Heart right ventricle (tissue), 16 donors: ENCODE measurements at regions of chr17 and their contacts with region 1.

Region 1: DNA sequence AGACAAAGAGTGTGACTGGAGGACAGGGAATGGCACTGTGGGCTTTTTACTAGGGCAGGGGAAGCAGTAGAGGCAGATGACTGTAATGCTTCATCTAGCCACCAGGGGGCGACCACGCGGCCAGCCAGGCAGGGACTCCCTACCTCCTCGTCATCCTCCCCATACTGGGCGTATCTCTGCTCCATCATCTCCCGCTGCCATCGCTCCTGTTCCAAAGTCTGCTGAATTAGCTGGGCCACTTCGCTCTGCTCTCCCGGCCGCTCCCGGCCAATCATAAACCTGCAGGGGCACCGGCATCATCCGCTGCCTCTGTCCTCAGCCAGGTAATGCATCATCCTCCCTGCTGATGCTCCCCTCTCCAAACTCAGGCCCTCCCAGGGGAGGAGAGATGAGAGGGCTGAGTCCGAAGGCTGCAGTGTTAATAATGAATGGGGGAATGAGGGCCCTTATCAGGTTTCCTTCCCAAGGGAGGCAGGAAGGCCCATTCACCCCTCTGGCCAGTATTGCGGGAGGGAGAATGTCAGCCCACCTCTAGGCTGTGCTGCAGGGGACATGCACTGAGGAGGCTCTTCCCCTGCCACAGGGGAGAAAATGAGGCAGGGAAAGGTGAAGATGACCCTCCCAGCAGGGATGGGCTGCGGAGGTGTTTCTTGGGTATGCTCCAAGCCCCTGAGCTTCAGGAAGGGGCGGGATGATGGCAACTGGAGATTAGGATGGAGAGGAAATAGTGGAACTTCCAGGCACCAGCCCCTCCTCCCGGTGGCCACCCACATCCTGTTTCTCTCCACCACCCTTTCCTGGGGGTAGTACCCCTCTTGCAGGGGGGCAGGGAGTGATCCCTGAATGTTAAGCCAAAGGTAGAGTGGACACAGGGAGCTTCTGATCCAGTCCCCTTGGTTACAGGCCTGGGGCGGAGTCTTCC is 10.3 kb upstream of the SAMD14 start:
- DNase-seq: peak; percentile 81 to 82
- ATAC-seq: peak; percentile 71 to 87 (median 78)
- H3K4me3 ChIP-seq: peak overlapping the region in 3 of 10 donors; percentile 10 to 19 (median 11)
- H3K27ac ChIP-seq: peak overlapping the region; percentile 29 to 83 (median 72)
- H3K4me1 ChIP-seq: peaks cover 14 to 61% (median 43%) of the 10 kb centered on the region in 9 donors
- H3K27me3 ChIP-seq: no peaks in the 10 kb centered on the region
- CTCF ChIP-seq: peak; percentile 92 to 99 (median 97)

Region 2: GRCh38 chr17:49899191-49899485 is 241.1 kb before region 1 on chr17:
- intact Hi-C with region 1: no loop called
- DNase-seq: no peak
- ATAC-seq: no peak
- H3K4me3 ChIP-seq: no peak overlapping the region
- H3K27ac ChIP-seq: no peak overlapping the region
- H3K4me1 ChIP-seq: peaks cover 0 to 6% (median 2%) of the 10 kb centered on the region in 9 donors
- H3K27me3 ChIP-seq: peaks cover 0 to 77% (median 57%) of the 10 kb centered on the region in 7 donors
- CTCF ChIP-seq: peak in 1 of 9 donors; percentile 9

Region 3: GRCh38 chr17:50123649-50124349 is 16.4 kb before region 1 on chr17:
- intact Hi-C with region 1: loop called in 1 of 10 experiments (anchors 1 kb)
- DNase-seq: no peak
- ATAC-seq: peak in 7 of 8 donors; percentile 7 to 50 (median 29)
- H3K4me3 ChIP-seq: no peak overlapping the region
- H3K27ac ChIP-seq: peak overlapping the region in 4 of 10 donors; percentile 38 to 69 (median 50)
- H3K4me1 ChIP-seq: peaks cover under 1 to 27% (median 12%) of the 10 kb centered on the region in 9 donors
- H3K27me3 ChIP-seq: peaks cover 0 to 42% (median 0%) of the 10 kb centered on the region in 7 donors
- CTCF ChIP-seq: no peak